ENCODE measurements at regions of chr4 and their contacts with region 1.

Region 1: GRCh38 chr4:169810325-169811323 is 52.9 kb upstream of the HPF1 start:
- DNase-seq: peak; percentile 29 to 68 (median 47)
- H3K4me3 ChIP-seq: no peak overlapping the region
- H3K4me3 Mint-ChIP-seq: no peak overlapping the region
- H3K27ac ChIP-seq: no peak overlapping the region
- H3K27ac Mint-ChIP-seq: no peak overlapping the region
- H3K4me1 ChIP-seq: no peaks in the 10 kb centered on the region
- H3K4me1 Mint-ChIP-seq: peaks cover 2% of the 10 kb centered on the region
- H3K27me3 ChIP-seq: no peaks in the 10 kb centered on the region
- H3K27me3 Mint-ChIP-seq: peaks cover 3 to 8% (median 6%) of the 10 kb centered on the region in 3 donors
- CTCF ChIP-seq: peak; percentile 82

Region 2: GRCh38 chr4:170040031-170040680 is 229.5 kb after region 1 on chr4:
- intact Hi-C with region 1: loop called (anchors 2 to 5 kb)
- DNase-seq: no peak
- H3K4me3 ChIP-seq: no peak overlapping the region
- H3K4me3 Mint-ChIP-seq: no peak overlapping the region
- H3K27ac ChIP-seq: no peak overlapping the region
- H3K27ac Mint-ChIP-seq: peak overlapping the region in 1 of 7 donors; percentile 74
- H3K4me1 ChIP-seq: no peaks in the 10 kb centered on the region
- H3K4me1 Mint-ChIP-seq: no peaks in the 10 kb centered on the region
- H3K27me3 ChIP-seq: no peaks in the 10 kb centered on the region
- H3K27me3 Mint-ChIP-seq: peaks cover 4 to 13% (median 5%) of the 10 kb centered on the region in 3 donors
- CTCF ChIP-seq: no peak

Region 3: GRCh38 chr4:170047771-170048354 is 237.2 kb after region 1 on chr4:
- intact Hi-C with region 1: loop called (anchors 2 to 5 kb)
- DNase-seq: peak; percentile 30 to 47 (median 41)
- H3K4me3 ChIP-seq: no peak overlapping the region
- H3K4me3 Mint-ChIP-seq: peak overlapping the region in 1 of 2 donors; percentile 13
- H3K27ac ChIP-seq: no peak overlapping the region
- H3K27ac Mint-ChIP-seq: no peak overlapping the region
- H3K4me1 ChIP-seq: no peaks in the 10 kb centered on the region
- H3K4me1 Mint-ChIP-seq: no peaks in the 10 kb centered on the region
- H3K27me3 ChIP-seq: peaks cover 0 to 3% of the 10 kb centered on the region in 2 donors
- H3K27me3 Mint-ChIP-seq: peaks cover 0 to 8% (median 5%) of the 10 kb centered on the region in 3 donors
- CTCF ChIP-seq: peak; percentile 81

Measured in CD14-positive monocyte (primary cell).